Common myeloid progenitor, CD34-positive (primary cell): ENCODE measurements at regions of chr20 and their contacts with region 1.

Region 1: GRCh38 chr20:63653078-63653973 is at the start of gene STMN3:
- DNase-seq: peak; percentile 92 to 96 (median 94)
- H3K4me3 ChIP-seq: peak within 1 kb of the TSS; percentile 61 to 86 (median 79)
- H3K27ac ChIP-seq: peak within 1 kb of the TSS in 1 of 2 experiments; percentile 49
- H3K4me1 ChIP-seq: peaks cover 0 to 46% (median 44%) of the 10 kb centered on the region in 4 experiments
- H3K27me3 ChIP-seq: no peaks in the 10 kb centered on the region

Region 2: GRCh38 chr20:63641792-63642544 is 11.4 kb before region 1 on chr20:
- CTCF ChIA-PET with region 1: interaction called, 17 read pairs
- POLR2A ChIA-PET with region 1: interaction called, 8 read pairs
- DNase-seq: peak; percentile 88 to 95 (median 93)
- H3K4me3 ChIP-seq: peak overlapping the region in 6 of 7 experiments; percentile 32 to 79 (median 70)
- H3K27ac ChIP-seq: no peak overlapping the region
- H3K4me1 ChIP-seq: peaks cover 2 to 46% (median 40%) of the 10 kb centered on the region in 4 experiments
- H3K27me3 ChIP-seq: no peaks in the 10 kb centered on the region